Prostate gland (tissue), 2 donors: ENCODE measurements at regions of chr6 and their contacts with region 1.

Region 1: DNA sequence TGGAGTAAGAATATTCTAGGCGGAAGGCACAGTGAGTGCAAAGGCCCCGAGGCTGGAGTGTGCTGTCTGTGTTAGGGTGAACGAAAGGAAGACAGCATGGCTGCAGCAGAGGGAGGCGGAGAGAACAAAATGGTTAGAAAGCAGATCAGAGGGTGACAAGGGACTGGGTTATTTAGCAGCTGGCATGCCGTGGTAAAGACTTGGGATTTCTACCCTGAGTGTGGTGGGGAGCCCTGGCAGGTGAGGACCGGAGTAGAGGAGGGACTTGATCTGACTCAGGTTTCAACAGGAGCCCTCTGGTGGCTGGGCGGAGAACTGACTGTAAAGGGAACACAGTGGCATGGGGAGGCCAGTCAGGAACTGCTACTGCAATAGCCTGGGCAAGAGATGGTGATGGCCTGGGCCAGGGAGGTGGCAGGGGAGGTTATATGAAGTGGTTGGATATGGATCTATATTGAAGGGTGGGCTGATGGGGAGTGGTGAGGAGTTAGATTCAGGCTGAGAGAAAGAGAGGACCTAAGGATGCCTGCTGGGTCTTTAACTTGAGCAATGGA is 38.0 kb downstream of the PIM1 start:
- DNase-seq: peak; percentile 61
- H3K4me3 ChIP-seq: no peak overlapping the region
- H3K27ac ChIP-seq: no peak overlapping the region
- H3K4me1 ChIP-seq: no peaks in the 10 kb centered on the region
- H3K27me3 ChIP-seq: no peaks in the 10 kb centered on the region
- CTCF ChIP-seq: peak; percentile 16 to 86 (median 57)
- POLR2A ChIP-seq: no peak

Region 2: DNA sequence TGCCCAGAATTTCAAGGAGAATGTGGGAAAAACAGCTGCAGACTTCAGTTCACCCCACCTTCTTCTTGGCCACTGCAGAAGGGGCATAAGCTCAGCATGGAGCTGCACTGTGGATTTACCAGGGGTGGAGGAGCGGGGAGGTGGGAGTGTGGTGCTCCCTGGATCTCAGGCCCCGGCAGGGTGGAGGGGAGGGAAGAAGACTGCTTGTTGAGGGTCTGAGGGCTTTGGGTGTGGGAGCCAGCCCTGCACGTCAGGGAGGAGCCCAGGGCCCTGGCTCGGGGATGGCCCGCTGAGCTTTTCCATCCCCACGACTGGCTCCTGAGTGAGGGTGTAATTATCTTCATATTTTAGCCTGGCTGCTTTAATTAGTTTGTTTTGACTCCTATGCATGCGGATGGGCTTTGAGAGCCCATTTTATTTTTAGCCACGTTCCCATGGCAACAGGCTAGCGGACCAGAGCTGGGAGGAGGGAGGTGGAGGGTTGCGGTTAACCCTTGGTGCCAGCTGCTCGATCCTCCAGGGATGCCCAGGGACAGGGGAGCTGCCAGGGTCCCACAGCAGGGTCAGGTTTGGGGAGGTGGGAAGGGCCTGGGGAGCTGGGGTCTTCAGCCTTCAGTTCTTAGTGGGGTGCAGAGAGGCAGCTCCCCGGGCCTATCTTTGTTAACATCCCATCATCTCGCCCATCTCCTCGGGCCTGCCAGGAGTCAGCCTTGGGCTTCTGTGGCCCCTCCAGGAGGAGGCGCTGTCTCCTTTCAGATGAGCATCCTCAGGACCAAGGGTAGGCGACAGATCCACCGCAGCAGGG is 442.2 kb before region 1 on chr6:
- intact Hi-C with region 1: loop called (anchors 10 kb)
- DNase-seq: peak; percentile 75
- H3K4me3 ChIP-seq: no peak overlapping the region
- H3K27ac ChIP-seq: no peak overlapping the region
- H3K4me1 ChIP-seq: no peaks in the 10 kb centered on the region
- H3K27me3 ChIP-seq: no peaks in the 10 kb centered on the region
- CTCF ChIP-seq: peak; percentile 64 to 95 (median 89)
- POLR2A ChIP-seq: no peak

Region 3: DNA sequence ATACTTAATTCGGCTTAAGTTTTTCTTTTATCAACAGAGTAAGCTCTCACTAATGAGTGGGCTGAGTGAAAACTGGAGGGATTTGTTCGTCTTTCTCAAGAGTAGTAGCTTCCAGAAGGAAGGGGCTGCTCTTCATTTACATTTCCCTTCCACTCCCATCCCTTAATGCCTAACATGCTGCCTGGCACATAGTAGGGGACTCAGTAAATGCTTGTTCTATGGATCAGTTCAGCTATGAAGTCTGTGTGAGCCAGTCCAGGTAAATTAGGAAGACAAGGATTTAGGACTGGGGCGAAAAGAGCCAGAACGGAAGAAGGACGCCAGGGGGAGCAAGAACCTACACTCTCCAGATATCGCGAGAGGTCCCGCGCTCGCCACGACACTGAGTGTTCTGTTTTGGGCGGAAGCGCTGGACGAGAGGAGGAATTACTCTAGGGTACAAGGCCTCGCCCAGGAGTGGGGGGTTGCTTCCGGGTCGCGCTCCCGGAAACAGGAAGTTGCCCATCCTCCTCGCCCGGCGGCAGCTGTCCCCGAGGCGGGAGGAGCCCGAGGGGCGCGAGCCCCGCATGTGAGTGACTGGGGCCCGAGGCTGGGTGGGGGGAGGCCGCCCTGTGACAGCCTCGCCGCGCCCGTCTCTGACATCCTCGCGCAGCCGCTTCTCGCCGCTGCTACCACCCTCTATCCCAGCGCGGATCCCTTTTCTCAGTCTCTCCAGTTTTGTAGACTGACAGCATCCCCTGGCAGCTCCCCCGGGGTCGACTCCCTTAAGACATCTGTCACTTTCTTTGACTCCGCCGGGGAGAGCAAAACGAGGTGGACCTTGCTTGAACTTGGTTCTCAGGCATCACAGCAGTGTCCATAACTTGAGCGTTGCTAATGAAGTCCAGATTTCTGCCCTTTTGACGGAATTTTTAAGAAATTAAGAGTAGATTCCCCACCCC is 322.2 kb before region 1 on chr6 and contains the start of gene C6orf89:
- intact Hi-C with region 1: loop called (anchors 5 kb)
- DNase-seq: peak; percentile 97
- H3K4me3 ChIP-seq: peak within 1 kb of the TSS; percentile 64 to 69
- H3K27ac ChIP-seq: peak within 1 kb of the TSS; percentile 72 to 76
- H3K4me1 ChIP-seq: peaks cover 5% of the 10 kb centered on the region
- H3K27me3 ChIP-seq: no peaks in the 10 kb centered on the region
- CTCF ChIP-seq: peak; percentile 84 to 98 (median 96)
- POLR2A ChIP-seq: peak; percentile 53
- total RNA-seq, gene C6orf89: 54.9 to 96.9 TPM

Region 4: GRCh38 chr6:37029249-37029971 is 178.6 kb before region 1 on chr6:
- intact Hi-C with region 1: loop called (anchors 5 kb)
- DNase-seq: no peak
- H3K4me3 ChIP-seq: no peak overlapping the region
- H3K27ac ChIP-seq: no peak overlapping the region
- H3K4me1 ChIP-seq: no peaks in the 10 kb centered on the region
- H3K27me3 ChIP-seq: no peaks in the 10 kb centered on the region
- CTCF ChIP-seq: peak in 3 of 4 experiments; percentile 42 to 73 (median 56)
- POLR2A ChIP-seq: no peak

Region 5: DNA sequence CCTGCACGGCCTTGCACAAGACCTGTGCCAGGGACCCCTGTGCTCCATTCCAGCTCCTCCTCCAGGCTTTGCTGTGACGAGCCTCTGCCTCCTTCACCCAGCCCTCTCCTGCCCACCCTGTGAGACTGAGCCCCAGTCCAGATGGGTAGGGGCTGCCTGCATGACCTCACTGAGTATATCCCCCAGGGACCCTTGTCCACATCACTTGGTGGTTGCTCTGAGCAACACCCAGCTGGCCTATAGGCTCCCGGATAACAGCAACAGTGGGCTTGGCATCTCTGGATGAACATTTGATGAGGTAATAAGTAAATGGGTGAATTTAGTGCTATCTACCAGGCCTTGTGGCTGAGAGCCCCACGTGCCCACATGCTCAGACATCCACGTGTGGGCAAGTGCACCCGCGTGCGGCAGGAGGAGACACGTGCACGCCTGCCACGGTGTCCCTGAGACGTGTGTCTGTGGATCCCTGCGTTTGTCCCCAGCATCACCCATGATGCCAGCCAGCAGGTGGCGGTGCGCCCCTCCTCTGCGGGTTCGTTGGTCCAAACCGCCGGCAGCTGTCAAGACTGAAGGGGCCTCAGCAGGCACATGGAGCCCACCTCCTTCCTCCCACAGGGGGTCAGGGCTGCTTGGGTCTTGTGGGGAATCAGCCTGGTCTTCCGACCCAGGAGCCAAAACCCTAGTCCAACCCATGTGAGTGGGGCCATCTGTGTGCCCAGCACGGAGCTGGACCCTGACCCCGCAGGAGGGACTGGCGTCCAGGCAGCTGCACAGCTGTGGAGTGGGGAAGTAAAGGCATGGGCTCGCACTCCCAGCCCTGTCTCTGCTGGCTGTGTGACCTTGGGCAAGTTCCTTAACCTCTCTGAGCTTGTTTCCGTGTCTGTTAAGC is 156.6 kb before region 1 on chr6:
- intact Hi-C with region 1: loop called (anchors 10 kb)
- DNase-seq: peak; percentile 86
- H3K4me3 ChIP-seq: no peak overlapping the region
- H3K27ac ChIP-seq: no peak overlapping the region
- H3K4me1 ChIP-seq: no peaks in the 10 kb centered on the region
- H3K27me3 ChIP-seq: no peaks in the 10 kb centered on the region
- CTCF ChIP-seq: peak; percentile 93 to 98 (median 96)
- POLR2A ChIP-seq: no peak

Region 6: GRCh38 chr6:37169496-37170272 is 38.3 kb before region 1 on chr6 and contains the start of gene PIM1:
- intact Hi-C with region 1: loop called (anchors 2 kb)
- DNase-seq: peak; percentile 99
- H3K4me3 ChIP-seq: peak within 1 kb of the TSS; percentile 54 to 60
- H3K27ac ChIP-seq: peak within 1 kb of the TSS; percentile 84 to 90
- H3K4me1 ChIP-seq: peaks cover 5% of the 10 kb centered on the region
- H3K27me3 ChIP-seq: no peaks in the 10 kb centered on the region
- CTCF ChIP-seq: peak in 1 of 4 experiments; percentile 12
- POLR2A ChIP-seq: peak; percentile 96
- total RNA-seq, gene PIM1: 4.8 to 35.3 TPM

Region 7: GRCh38 chr6:37783025-37783855 is 575.3 kb after region 1 on chr6:
- intact Hi-C with region 1: no loop called
- DNase-seq: no peak
- H3K4me3 ChIP-seq: peak overlapping the region; percentile 34 to 40
- H3K27ac ChIP-seq: peak overlapping the region; percentile 53 to 63
- H3K4me1 ChIP-seq: peaks cover 7% of the 10 kb centered on the region
- H3K27me3 ChIP-seq: no peaks in the 10 kb centered on the region
- CTCF ChIP-seq: no peak
- POLR2A ChIP-seq: no peak